Colonic mucosa (tissue), 4 donors: ENCODE measurements at regions of chr10 and their contacts with region 1.

Region 1: GRCh38 chr10:51010977-51011376 is 63.3 kb upstream of the PRKG1 start:
- DNase-seq: no peak
- H3K4me3 ChIP-seq: no peak overlapping the region
- H3K27ac ChIP-seq: no peak overlapping the region
- H3K4me1 ChIP-seq: no peaks in the 10 kb centered on the region
- H3K27me3 ChIP-seq: no peaks in the 10 kb centered on the region
- CTCF ChIP-seq: peak; percentile 79

Region 2: DNA sequence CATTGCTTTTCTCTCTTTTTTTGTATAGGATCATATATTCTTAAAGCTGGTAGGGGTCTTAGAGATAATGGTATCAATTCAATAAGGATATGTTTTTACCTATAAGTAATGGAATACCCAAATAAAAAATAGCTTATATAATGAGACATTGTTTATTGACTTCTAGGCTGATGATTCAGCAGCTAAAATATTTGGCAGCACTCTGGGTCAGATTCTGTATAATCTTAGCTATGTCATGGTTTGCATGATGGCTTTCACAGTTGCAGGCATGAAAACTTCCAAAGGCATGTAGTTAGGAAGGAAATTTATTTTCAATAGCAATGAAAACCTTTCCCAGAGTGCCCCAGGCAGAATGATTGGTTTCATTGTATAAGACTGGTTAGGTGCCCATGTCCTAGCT is 93.5 kb before region 1 on chr10:
- intact Hi-C with region 1: no loop called
- DNase-seq: no peak
- H3K4me3 ChIP-seq: no peak overlapping the region
- H3K27ac ChIP-seq: no peak overlapping the region
- H3K4me1 ChIP-seq: no peaks in the 10 kb centered on the region
- H3K27me3 ChIP-seq: no peaks in the 10 kb centered on the region
- CTCF ChIP-seq: no peak

Region 3: DNA sequence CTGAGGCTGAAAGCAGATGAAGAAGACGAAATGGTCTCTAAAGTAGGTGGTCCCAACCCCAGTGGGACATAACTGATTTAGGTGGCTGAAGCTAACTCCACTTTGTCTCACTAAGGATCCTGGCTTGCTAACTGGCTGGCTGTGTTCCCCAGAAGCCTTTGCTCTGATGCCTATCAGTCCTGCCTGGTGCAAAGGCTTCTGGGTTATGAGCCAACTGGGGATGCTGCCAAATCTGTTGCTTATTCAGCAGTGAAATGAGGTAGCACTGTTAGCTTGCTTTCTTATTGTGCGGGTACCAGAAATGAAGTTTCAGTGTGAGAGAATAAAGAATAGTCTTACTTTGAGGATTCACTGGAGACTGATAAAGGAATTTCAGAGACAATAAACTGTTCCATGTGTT is 81.4 kb after region 1 on chr10:
- intact Hi-C with region 1: no loop called
- DNase-seq: peak; percentile 53
- H3K4me3 ChIP-seq: no peak overlapping the region
- H3K27ac ChIP-seq: no peak overlapping the region
- H3K4me1 ChIP-seq: no peaks in the 10 kb centered on the region
- H3K27me3 ChIP-seq: no peaks in the 10 kb centered on the region
- CTCF ChIP-seq: no peak

Region 4: DNA sequence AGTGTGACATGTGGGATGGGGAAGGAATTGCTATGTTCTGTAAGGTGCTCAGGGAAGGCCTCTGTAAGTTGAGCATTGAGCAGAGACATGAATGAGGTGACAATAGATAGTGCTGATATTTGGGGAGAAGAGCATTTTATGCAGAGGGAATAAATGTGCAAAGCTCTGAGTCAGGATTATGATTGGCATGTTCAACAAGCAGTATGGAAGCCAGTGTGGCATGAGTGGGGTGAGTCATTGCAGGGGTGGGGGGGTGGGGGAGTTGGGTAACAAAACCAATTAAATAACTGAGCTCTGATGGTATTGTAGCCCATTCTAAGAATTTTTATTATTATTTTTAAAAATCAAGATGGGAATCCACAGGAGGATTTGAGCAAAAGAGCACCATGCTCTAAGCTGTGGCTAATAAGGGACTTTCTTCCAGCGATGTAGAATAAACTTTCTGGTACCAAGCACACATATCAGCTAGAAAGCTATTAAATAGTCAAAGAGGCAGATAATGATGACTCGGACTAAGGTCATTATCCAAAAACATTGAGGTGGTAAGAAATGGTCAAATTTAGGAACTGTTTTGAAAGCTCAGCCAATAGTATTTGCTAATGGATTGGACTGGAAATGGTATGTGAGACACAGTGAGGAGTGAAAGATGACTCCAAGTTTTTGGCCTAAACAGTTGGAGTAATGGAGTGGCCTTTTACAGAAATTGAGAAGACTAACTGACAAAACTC is 159.7 kb after region 1 on chr10:
- intact Hi-C with region 1: no loop called
- DNase-seq: no peak
- H3K4me3 ChIP-seq: no peak overlapping the region
- H3K27ac ChIP-seq: no peak overlapping the region
- H3K4me1 ChIP-seq: no peaks in the 10 kb centered on the region
- H3K27me3 ChIP-seq: no peaks in the 10 kb centered on the region
- CTCF ChIP-seq: no peak

Region 5: DNA sequence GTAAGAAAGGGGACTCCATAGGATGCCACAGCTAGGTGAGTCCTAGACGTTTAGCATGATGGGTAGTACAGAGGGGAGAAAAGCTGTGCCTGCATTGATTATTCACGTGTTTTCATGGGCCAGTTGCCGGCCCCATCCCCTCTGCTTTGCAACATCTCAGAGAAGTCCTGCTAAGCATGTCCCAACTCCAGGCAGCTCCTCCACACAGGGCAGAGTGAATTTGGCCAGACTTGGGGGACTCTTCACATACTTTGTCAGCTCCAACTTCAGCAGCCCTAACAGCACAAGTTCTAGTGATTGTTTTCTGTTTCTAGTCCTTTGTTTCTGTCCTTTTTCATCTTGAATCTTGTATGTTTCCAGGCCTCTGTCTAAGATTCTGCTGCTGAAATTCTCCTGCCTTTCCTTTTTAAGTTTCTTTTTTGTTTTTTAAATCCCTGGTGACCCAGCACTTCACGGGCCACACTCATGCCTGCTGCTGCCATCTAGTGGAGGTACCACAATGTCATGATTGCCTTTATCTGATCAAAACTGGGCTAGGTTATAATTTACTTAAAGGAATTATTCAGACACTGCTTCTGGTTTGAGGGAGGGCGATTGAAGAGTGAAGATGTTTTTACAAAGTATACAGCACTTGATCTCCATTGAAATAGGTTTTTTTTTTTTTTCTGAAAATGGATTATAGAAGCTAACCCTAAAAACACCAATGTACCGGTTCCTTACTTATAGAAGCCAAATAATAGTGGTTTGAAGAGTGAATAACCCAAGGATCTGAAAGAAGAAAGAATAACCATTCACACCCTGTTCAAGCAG is 411.5 kb after region 1 on chr10:
- intact Hi-C with region 1: loop called (anchors 5 kb)
- DNase-seq: peak; percentile 69
- H3K4me3 ChIP-seq: no peak overlapping the region
- H3K27ac ChIP-seq: peak overlapping the region; percentile 38
- H3K4me1 ChIP-seq: peaks cover 6% of the 10 kb centered on the region
- H3K27me3 ChIP-seq: no peaks in the 10 kb centered on the region
- CTCF ChIP-seq: peak; percentile 65

Region 6: GRCh38 chr10:51960494-51960895 is 949.5 kb after region 1 on chr10:
- intact Hi-C with region 1: loop called (anchors 10 kb)
- DNase-seq: no peak
- H3K4me3 ChIP-seq: no peak overlapping the region
- H3K27ac ChIP-seq: no peak overlapping the region
- H3K4me1 ChIP-seq: no peaks in the 10 kb centered on the region
- H3K27me3 ChIP-seq: no peaks in the 10 kb centered on the region
- CTCF ChIP-seq: peak; percentile 51

Region 7: DNA sequence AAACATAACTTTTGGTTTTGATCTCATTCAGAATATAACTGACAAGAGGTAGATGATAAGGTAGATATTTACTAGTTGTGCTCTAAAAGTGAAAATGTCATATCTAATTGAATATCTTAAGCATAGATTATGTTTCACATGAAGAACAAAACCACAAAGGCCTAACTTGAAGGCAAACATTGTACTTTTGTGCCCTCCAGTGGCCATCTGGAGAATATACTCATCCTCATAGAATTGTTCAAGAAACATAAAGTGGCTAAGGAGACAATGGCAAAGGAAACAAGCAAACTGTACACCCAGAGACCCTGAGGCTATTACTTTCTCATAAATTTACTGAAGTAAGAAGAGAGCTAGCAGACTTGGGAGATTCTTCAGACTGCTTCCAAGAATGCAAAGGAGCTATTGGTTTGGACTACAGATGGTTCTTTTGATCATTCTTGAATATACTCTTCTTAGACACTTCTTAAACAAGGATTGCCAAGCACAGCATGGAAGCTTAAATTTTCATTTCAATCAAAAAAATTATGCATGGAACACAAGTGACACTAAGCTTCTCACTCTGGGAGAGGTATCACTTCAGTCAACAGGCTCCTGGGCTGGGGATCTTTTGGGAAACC is 1204.9 kb after region 1 on chr10:
- intact Hi-C with region 1: loop called (anchors 5 kb)
- DNase-seq: peak; percentile 68
- H3K4me3 ChIP-seq: no peak overlapping the region
- H3K27ac ChIP-seq: no peak overlapping the region
- H3K4me1 ChIP-seq: peaks cover 9% of the 10 kb centered on the region
- H3K27me3 ChIP-seq: no peaks in the 10 kb centered on the region
- CTCF ChIP-seq: peak; percentile 76